IMR-90 (cell line): ENCODE measurements at regions of chr3 and their contacts with region 1.

Region 1: GRCh38 chr3:43540624-43541023 is 81.2 kb downstream of the ANO10 start:
- DNase-seq: peak; percentile 58
- ATAC-seq: peak; percentile 95
- H3K4me3 ChIP-seq: no peak overlapping the region
- H3K27ac ChIP-seq: peak overlapping the region; percentile 63; the same call in 1 of the 2 replicates
- H3K4me1 ChIP-seq: peaks cover 7% of the 10 kb centered on the region
- H3K27me3 ChIP-seq: no peaks in the 10 kb centered on the region
- CTCF ChIP-seq: no peak
- POLR2A ChIP-seq: no peak
- RAD21 ChIP-seq: no peak

Region 2: GRCh38 chr3:43223670-43224364 is 316.8 kb before region 1 on chr3:
- CTCF ChIA-PET with region 1: no interaction called
- POLR2A ChIA-PET with region 1: no interaction called
- dilution Hi-C with region 1: no loop called
- in situ Hi-C with region 1: no loop called
- intact Hi-C with region 1: loop called (anchors 5 kb)
- DNase-seq: peak; percentile 27
- ATAC-seq: peak; percentile 27; the same call in 1 of the 2 replicates
- H3K4me3 ChIP-seq: no peak overlapping the region
- H3K27ac ChIP-seq: no peak overlapping the region
- H3K4me1 ChIP-seq: no peaks in the 10 kb centered on the region
- H3K27me3 ChIP-seq: peaks cover 6% of the 10 kb centered on the region; the same call in 1 of the 2 replicates
- CTCF ChIP-seq: peak; percentile 64
- POLR2A ChIP-seq: no peak
- RAD21 ChIP-seq: peak; percentile 70

Region 3: DNA sequence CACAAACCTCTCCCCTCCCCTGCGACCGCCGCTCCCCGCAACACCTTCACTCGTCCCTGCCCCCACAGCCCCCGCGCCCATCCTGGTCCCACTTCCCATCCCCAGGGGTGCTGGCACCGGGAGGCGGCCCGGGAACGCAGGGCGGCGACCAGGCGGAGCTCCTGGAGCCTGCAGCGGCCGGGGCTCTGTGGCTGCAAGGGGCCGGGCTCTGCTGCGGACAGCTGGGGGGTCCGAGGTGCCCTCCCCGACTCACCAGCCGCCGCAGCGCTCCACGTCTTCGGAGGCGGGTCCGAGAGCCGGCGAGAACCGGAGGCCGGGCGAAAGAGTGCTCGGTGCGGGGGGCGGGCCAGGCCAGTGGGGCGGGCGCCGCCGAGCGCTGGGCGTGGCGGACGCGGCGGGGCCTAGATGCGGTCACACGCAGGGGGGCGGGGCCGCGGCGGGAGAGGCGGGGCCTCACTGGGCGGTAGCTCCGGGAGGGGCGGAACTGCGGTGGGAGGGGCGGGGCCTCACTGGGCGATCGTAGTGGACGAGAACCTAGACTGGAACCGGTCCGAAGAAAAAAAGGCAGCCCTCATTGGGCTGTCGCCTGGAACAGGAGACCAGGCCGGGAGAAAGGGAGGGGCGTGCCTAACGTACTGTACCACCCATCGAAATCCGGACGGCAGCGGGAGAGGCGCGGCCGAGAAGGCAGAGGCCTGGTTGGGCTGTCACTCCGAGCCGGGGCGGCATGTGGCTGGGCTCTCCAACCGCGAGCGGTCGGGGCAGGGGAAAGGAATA is 81.2 kb after region 1 on chr3 and contains the start of gene ANO10:
- CTCF ChIA-PET with region 1: no interaction called
- POLR2A ChIA-PET with region 1: no interaction called
- dilution Hi-C with region 1: no loop called
- in situ Hi-C with region 1: no loop called
- intact Hi-C with region 1: no loop called
- DNase-seq: peak; percentile 99
- ATAC-seq: peak; percentile 95
- H3K4me3 ChIP-seq: peak within 1 kb of the TSS; percentile 81
- H3K27ac ChIP-seq: peak within 1 kb of the TSS; percentile 78
- H3K4me1 ChIP-seq: peaks cover 4% of the 10 kb centered on the region
- H3K27me3 ChIP-seq: no peaks in the 10 kb centered on the region
- CTCF ChIP-seq: no peak
- POLR2A ChIP-seq: no peak
- RAD21 ChIP-seq: no peak; the same call in 1 of the 2 replicates
- total RNA-seq, gene ANO10: 41.6 and 42.5 TPM in 2 replicates

Region 4: DNA sequence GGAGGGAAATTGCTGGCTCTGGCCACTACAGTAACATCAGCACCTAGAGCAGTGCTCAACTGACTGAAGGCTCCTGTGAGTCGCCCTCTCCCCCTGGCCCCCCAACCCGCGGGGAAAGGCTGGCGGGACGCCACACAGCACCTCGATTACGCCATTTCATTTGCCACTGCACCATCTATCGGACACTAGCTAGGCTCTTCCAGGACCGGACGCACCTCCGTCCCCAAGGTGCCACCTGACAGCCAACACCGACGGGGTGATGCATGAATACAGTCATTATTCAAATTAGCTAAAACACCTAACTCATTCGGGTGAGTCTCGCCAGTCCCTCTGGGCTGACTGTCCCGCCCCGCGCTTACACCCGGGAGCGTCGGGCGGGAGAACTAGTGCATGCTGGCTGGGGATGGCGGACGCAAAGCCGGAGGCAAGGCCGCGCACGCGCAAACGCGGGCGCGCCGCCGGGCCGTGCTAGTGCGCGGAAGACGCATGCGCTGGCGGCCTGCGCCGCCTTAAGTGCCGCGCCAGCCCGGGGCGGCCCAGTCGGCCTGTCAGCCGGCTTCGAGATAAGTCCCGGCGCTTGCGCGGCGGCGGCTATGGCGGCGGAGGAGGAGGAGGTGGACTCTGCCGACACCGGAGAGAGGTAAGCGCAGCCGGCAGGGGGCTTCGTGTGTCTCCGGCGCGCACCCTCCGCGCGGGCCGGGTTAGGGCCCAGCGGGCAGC is 149.9 kb after region 1 on chr3 and contains the start of gene ABHD5:
- CTCF ChIA-PET with region 1: no interaction called
- POLR2A ChIA-PET with region 1: no interaction called
- dilution Hi-C with region 1: no loop called
- in situ Hi-C with region 1: no loop called
- intact Hi-C with region 1: loop called (anchors 5 kb)
- DNase-seq: peak; percentile 95
- ATAC-seq: peak; percentile 90
- H3K4me3 ChIP-seq: peak within 1 kb of the TSS; percentile 87
- H3K27ac ChIP-seq: peak within 1 kb of the TSS; percentile 66
- H3K4me1 ChIP-seq: peaks cover 6% of the 10 kb centered on the region
- H3K27me3 ChIP-seq: no peaks in the 10 kb centered on the region
- CTCF ChIP-seq: peak; percentile 41; the same call in 1 of the 2 replicates
- POLR2A ChIP-seq: peak; percentile 99
- RAD21 ChIP-seq: peak; percentile 27
- total RNA-seq, gene ABHD5: 33.2 and 33.6 TPM in 2 replicates

Region 5: GRCh38 chr3:43769471-43770425 is 229.1 kb after region 1 on chr3:
- CTCF ChIA-PET with region 1: interaction called, 4 read pairs
- POLR2A ChIA-PET with region 1: no interaction called
- dilution Hi-C with region 1: no loop called
- in situ Hi-C with region 1: no loop called
- intact Hi-C with region 1: loop called (anchors 2 kb)
- DNase-seq: peak; percentile 91
- ATAC-seq: peak; percentile 97
- H3K4me3 ChIP-seq: no peak overlapping the region
- H3K27ac ChIP-seq: no peak overlapping the region
- H3K4me1 ChIP-seq: peaks cover 31% of the 10 kb centered on the region
- H3K27me3 ChIP-seq: no peaks in the 10 kb centered on the region
- CTCF ChIP-seq: peak; percentile 92
- POLR2A ChIP-seq: no peak
- RAD21 ChIP-seq: peak; percentile 77

Region 6: GRCh38 chr3:43855674-43856299 is 315.2 kb after region 1 on chr3:
- CTCF ChIA-PET with region 1: no interaction called
- POLR2A ChIA-PET with region 1: no interaction called
- dilution Hi-C with region 1: no loop called
- in situ Hi-C with region 1: no loop called
- intact Hi-C with region 1: loop called (anchors 10 kb)
- DNase-seq: peak; percentile 56
- ATAC-seq: peak; percentile 85
- H3K4me3 ChIP-seq: no peak overlapping the region
- H3K27ac ChIP-seq: no peak overlapping the region
- H3K4me1 ChIP-seq: peaks cover 9% of the 10 kb centered on the region
- H3K27me3 ChIP-seq: peaks cover 2% of the 10 kb centered on the region; the same call in 1 of the 2 replicates
- CTCF ChIP-seq: peak; percentile 68
- POLR2A ChIP-seq: no peak
- RAD21 ChIP-seq: peak; percentile 75

Region 7: DNA sequence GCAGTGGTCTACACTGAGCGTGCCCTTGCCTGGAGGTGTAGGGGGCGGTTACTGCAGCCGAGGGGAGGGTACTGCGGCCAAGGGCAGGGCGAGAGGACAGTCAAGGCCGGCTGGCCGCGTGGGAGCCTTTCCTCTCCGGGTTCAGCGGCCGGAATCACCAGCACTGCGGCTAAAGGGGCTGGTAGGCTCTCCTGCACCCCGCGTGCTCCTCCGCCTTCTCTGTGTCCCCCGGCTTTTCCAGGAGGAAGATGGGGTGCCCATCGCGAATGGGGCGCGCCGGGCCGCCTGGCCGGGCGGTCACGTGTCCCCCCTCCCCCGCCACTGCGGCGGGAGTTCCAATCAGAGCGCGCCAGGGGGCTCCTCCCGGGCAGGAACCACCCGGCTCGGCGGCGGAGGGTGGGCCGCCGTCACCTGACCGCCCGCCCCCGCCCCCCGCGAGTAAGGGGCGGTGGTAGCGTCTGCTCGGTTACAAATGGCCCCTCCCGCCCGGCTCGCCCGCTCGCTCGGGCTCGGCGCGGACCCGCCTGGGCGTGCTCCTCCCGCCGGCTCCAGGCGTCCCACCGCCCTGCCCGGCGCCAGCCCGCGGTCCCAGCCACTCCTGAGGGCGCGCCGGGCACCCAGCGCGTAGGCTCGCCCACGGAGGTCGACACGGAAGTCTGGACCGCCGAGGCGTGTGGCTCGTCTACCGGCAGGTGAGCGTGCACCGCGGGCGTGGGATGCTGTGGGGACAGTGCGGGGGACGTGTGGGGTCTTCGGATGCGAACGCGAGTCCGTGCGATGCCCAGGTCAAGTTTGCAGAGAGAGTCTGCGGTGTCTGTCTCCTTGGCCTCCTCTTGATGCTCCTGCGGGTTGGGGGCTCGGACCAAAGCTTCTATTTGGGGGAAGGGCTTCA is 458.5 kb after region 1 on chr3:
- CTCF ChIA-PET with region 1: no interaction called
- POLR2A ChIA-PET with region 1: no interaction called
- dilution Hi-C with region 1: no loop called
- in situ Hi-C with region 1: no loop called
- intact Hi-C with region 1: loop called (anchors 10 kb)
- DNase-seq: no peak
- ATAC-seq: peak; percentile 30
- H3K4me3 ChIP-seq: peak overlapping the region; percentile 27; the same call in 1 of the 2 replicates
- H3K27ac ChIP-seq: no peak overlapping the region
- H3K4me1 ChIP-seq: no peaks in the 10 kb centered on the region; the same call in 1 of the 2 replicates
- H3K27me3 ChIP-seq: peaks cover 69% of the 10 kb centered on the region
- CTCF ChIP-seq: no peak
- POLR2A ChIP-seq: no peak
- RAD21 ChIP-seq: no peak

Region 8: DNA sequence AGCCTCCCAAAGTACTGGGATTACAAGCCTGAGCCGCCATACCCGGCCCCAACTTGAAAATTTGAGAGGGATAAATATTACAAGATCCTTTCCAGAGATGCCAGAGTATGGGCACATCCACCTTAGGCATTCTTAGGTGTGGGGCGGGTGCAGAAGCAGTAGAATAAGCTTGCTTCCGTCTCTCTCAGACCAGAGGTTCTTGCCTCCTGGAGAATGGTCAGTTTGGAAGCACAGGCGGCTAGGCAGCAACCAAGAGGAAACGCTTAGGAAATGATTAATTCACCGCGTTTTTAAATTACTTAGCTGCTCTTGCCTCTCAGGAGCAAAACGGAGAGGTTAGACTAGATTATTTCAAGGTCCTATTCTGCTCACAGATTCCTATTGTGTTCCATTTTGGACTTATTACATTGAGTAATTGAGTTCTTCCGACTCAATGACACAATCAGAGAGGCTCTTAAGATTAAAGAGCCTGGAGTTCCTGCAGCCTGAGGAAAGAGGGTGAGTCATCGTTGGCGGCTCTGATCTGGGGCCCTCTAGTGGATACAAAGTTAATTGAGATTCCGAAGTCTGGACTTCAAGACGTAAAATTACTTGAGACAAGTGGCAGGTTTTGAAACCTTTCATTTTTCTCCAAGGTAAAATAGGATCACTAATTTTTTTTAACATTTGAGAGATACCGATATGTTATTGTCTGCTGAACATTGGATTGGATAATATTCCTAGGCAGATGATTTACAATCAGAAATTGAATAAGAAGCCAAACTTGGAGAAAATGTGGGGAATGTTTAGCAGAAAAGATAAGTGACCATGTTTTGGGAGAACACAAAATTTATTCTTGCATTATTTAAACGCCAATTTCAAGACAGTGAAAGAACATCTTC is 695.2 kb after region 1 on chr3:
- CTCF ChIA-PET with region 1: no interaction called
- POLR2A ChIA-PET with region 1: no interaction called
- dilution Hi-C with region 1: no loop called
- in situ Hi-C with region 1: no loop called
- intact Hi-C with region 1: loop called (anchors 1 kb)
- DNase-seq: peak; percentile 85
- ATAC-seq: peak; percentile 94
- H3K4me3 ChIP-seq: no peak overlapping the region
- H3K27ac ChIP-seq: no peak overlapping the region
- H3K4me1 ChIP-seq: no peaks in the 10 kb centered on the region
- H3K27me3 ChIP-seq: no peaks in the 10 kb centered on the region
- CTCF ChIP-seq: peak; percentile 78
- POLR2A ChIP-seq: no peak
- RAD21 ChIP-seq: peak; percentile 34